H1 (cell line): ENCODE measurements at regions of chr1 and their contacts with region 1.

Region 1: GRCh38 chr1:88029142-88029541 is 654.9 kb upstream of the PKN2 start:
- DNase-seq: no peak
- H3K4me3 ChIP-seq: no peak overlapping the region
- H3K27ac ChIP-seq: no peak overlapping the region
- H3K4me1 ChIP-seq: no peaks in the 10 kb centered on the region; a peak in 1 of 7 replicates
- H3K27me3 ChIP-seq: no peaks in the 10 kb centered on the region
- CTCF ChIP-seq: peak in 2 of 3 experiments; percentile 29 to 30; a peak in 2 of 4 replicates
- EP300 ChIP-seq: no peak
- POLR2A ChIP-seq: no peak
- RAD21 ChIP-seq: peak in 1 of 2 experiments; percentile 28; a peak in 2 of 4 replicates

Region 2: DNA sequence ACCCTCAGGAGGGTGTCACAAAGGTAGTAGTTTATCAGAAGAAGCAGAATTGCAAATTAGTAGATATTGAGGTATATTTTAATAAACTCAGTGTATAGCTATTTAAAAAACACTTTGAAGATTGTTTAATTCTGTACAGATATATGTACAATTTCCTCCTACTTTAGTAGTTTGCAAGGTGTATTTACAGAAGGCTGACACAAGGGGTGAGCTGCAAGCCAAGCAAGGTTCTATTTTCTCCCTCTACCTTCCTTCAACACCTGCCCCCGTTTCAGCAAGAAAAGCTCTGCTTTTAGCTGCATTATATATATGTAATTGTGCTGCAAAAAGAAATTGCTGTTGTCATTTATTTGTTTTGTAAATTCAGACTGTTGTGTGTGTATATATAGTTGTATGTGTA is 19.2 kb before region 1 on chr1:
- CTCF ChIA-PET with region 1: interaction called, 11 read pairs
- POLR2A ChIA-PET with region 1: no interaction called
- DNase-seq: no peak
- H3K4me3 ChIP-seq: no peak overlapping the region
- H3K27ac ChIP-seq: no peak overlapping the region
- H3K4me1 ChIP-seq: no peaks in the 10 kb centered on the region
- H3K27me3 ChIP-seq: no peaks in the 10 kb centered on the region
- CTCF ChIP-seq: peak in 1 of 3 experiments; percentile 22; a peak in 2 of 4 replicates
- EP300 ChIP-seq: no peak
- POLR2A ChIP-seq: no peak
- RAD21 ChIP-seq: peak; percentile 27 to 37; a peak in 3 of 4 replicates

Region 3: DNA sequence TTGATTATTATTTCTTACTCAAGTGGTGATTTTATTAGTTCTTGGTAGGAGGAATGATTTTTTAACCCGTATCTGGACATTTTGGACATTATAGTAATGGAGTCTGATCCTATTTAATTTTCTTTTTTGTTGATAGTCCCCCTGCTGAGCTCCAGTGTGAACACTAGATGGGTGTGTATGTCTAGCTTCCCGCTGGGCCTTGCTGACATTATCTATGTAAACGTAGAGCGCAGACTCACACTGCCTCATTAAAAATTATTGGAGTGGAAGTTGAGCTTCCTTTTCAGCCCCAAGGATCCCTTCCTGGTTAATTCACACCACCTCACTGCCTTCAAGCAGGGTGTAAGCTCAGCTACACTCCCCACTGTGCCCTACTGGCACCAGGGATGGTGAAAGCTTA is 187.3 kb after region 1 on chr1:
- CTCF ChIA-PET with region 1: no interaction called
- POLR2A ChIA-PET with region 1: no interaction called
- DNase-seq: no peak
- H3K4me3 ChIP-seq: no peak overlapping the region
- H3K27ac ChIP-seq: no peak overlapping the region
- H3K4me1 ChIP-seq: peaks cover 0 to 2% (median 0%) of the 10 kb centered on the region in 4 experiments; a peak in 1 of 7 replicates
- H3K27me3 ChIP-seq: no peaks in the 10 kb centered on the region
- CTCF ChIP-seq: no peak
- EP300 ChIP-seq: no peak
- POLR2A ChIP-seq: no peak
- RAD21 ChIP-seq: no peak